Aorta (tissue), 5 donors: ENCODE measurements at regions of chr15 and their contacts with region 1.

Region 1: DNA sequence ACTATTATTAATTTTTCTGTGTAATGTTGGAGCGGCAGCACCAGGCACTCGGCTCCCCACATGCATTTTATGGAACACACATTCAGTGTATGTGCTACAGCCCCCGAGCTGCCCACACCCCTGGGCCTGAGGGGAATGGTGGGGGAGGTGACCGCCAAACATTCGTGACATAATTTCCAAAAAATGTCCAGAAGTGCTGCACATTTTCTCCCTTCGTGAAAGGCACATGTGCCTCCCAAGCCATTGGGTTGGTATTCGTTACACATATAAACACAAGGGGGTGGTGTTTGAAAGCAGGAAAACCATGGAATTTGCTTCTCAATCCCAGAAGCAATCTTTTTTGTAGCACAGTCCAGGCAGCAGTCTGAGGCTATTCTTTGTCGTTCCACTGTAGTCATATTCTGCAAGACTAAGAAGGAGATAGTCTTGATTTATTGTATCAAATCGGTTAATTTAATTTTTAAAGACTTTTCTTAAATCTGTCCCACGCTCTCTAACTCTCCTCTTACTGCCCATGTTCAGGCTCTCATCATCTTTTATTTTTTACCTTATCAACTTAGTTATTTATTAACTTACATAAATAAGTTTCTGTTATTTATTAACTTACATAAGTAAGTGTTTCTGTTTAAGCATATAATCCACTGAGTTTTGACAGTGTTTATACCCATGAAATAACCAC is 39.2 kb upstream of the POLR2M start:
- DNase-seq: no peak
- ATAC-seq: peak; percentile 87
- H3K4me3 ChIP-seq: no peak overlapping the region
- H3K27ac ChIP-seq: peak overlapping the region in 1 of 2 donors; percentile 12
- H3K4me1 ChIP-seq: peaks cover 0 to 2% of the 10 kb centered on the region in 2 donors
- H3K27me3 ChIP-seq: no peaks in the 10 kb centered on the region

Region 2: DNA sequence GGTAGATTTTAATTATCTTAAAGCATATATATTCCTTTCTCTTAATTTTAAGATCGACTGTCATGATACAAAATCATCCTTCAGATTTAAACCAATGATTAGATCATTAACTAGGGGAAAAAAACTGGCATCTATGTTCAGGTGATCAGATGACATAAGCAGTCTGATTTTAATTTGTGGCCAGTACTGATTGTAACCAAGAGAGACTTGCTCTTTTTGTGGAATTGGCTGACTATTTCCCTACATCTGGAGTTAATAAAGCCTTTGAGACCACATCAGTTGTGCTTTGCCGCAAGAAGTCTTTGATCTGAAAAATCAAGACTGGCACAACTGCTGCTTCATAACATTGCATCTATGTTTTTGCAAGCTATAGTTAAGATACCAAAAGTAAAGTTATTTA is 439.4 kb before region 1 on chr15:
- intact Hi-C with region 1: no loop called
- DNase-seq: no peak
- ATAC-seq: no peak
- H3K4me3 ChIP-seq: no peak overlapping the region
- H3K27ac ChIP-seq: no peak overlapping the region
- H3K4me1 ChIP-seq: peaks cover 0 to 2% of the 10 kb centered on the region in 2 donors
- H3K27me3 ChIP-seq: no peaks in the 10 kb centered on the region

Region 3: GRCh38 chr15:57611938-57612337 is 55.4 kb before region 1 on chr15:
- intact Hi-C with region 1: no loop called
- DNase-seq: peak in 1 of 2 donors; percentile 53
- ATAC-seq: peak; percentile 67
- H3K4me3 ChIP-seq: no peak overlapping the region
- H3K27ac ChIP-seq: peak overlapping the region in 1 of 2 donors; percentile 6
- H3K4me1 ChIP-seq: no peaks in the 10 kb centered on the region
- H3K27me3 ChIP-seq: no peaks in the 10 kb centered on the region

Region 4: DNA sequence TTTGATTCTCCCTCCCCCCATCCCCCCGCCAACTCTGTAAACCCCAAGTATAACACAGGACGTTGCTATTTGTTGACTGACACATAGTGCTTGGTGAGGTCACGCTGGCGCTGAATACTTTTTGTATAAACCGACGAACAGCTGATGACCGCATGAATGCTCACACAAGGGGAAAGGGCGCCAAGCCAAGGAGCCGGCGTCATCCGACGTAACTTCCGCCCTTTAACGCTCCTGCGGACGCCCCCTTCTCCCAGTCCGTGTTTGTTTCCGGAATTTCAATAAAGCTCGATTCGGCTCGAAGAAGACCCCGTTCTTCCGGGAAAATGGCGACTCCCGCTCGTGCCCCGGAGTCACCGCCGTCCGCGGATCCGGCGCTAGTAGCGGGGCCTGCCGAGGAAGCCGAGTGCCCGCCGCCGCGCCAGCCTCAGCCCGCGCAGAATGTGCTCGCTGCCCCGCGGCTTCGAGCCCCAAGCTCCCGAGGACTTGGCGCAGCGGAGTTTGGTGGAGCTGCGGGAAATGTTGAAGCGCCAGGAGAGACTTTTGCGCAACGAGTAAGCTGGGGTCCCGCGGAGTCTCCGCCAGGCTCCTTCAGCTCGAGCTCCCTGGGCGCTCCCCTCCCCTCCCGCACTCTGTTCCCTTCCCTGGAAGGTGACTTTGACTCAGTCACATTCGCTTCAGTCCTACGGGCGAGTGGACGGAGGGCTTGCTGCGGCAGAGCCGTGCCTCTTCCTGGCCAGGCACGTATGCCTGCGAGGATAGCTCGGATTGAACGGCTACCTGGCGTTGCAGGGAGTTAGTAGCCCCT is 39.3 kb after region 1 on chr15 and contains the start of gene POLR2M:
- intact Hi-C with region 1: loop called (anchors 2 to 5 kb)
- DNase-seq: peak; percentile 97 to 98
- ATAC-seq: peak; percentile 96
- H3K4me3 ChIP-seq: peak within 1 kb of the TSS; percentile 92 to 96
- H3K27ac ChIP-seq: peak within 1 kb of the TSS; percentile 85 to 97
- H3K4me1 ChIP-seq: peaks cover 1 to 3% of the 10 kb centered on the region in 2 donors
- H3K27me3 ChIP-seq: no peaks in the 10 kb centered on the region
- total RNA-seq, gene POLR2M: 102 to 119 TPM

Region 5: DNA sequence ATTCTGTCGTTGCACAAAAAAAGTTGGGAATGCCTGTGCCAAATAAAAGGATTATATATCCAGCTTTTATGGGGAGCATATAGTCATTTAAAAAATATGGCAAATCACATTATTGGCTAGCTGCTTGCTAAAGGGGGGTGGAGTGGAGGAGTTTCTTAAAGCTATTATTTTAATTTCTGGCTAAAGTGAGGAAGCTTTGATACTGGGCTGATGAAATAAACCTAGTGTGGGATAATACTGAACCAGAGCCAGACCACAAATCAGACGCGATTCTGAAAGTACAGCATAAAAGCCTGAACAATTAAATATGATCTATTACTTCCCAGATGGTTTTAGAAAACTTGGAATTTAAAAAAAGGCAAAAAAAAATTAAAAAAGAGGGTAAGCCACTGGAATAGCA is 53.6 kb after region 1 on chr15:
- intact Hi-C with region 1: loop called in 1 of 2 experiments (anchors 5 kb)
- DNase-seq: no peak
- ATAC-seq: no peak
- H3K4me3 ChIP-seq: no peak overlapping the region
- H3K27ac ChIP-seq: no peak overlapping the region
- H3K4me1 ChIP-seq: no peaks in the 10 kb centered on the region
- H3K27me3 ChIP-seq: no peaks in the 10 kb centered on the region

Region 6: GRCh38 chr15:57732526-57733331 is 65.4 kb after region 1 on chr15:
- intact Hi-C with region 1: loop called in 1 of 2 experiments (anchors 5 kb)
- DNase-seq: no peak
- ATAC-seq: no peak
- H3K4me3 ChIP-seq: no peak overlapping the region
- H3K27ac ChIP-seq: no peak overlapping the region
- H3K4me1 ChIP-seq: no peaks in the 10 kb centered on the region
- H3K27me3 ChIP-seq: no peaks in the 10 kb centered on the region

Region 7: DNA sequence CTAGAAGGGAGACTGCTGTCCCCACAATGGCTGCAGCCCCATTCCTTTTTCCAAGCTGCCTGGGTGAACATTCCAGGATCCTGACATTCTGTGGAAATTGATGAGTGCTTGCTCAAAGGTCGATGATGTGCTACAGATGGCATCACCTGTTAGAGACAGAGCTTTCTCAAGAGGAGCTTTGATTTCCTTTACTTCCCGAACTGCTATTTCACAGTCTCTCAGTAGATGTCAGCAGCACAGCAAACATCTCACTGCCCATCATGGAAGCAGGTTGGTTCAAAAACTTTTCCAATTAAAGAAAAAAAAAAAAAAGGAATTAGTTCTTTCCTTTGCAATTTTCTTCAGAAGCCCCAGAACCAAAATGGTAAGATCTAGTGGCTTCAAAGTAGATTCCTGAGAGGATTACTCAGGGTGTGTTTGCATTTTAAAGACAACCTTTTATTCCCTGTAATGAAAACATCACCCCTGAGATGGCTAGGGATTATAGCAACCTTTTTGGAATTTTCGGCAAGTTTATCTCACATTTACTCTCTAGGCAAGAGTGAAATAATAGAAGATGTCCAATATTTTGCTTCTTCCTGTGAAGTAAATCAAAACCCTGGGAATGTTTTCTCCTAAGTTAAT is 84.0 kb after region 1 on chr15:
- intact Hi-C with region 1: no loop called
- DNase-seq: no peak
- ATAC-seq: no peak
- H3K4me3 ChIP-seq: no peak overlapping the region
- H3K27ac ChIP-seq: no peak overlapping the region
- H3K4me1 ChIP-seq: no peaks in the 10 kb centered on the region
- H3K27me3 ChIP-seq: no peaks in the 10 kb centered on the region

Region 8: DNA sequence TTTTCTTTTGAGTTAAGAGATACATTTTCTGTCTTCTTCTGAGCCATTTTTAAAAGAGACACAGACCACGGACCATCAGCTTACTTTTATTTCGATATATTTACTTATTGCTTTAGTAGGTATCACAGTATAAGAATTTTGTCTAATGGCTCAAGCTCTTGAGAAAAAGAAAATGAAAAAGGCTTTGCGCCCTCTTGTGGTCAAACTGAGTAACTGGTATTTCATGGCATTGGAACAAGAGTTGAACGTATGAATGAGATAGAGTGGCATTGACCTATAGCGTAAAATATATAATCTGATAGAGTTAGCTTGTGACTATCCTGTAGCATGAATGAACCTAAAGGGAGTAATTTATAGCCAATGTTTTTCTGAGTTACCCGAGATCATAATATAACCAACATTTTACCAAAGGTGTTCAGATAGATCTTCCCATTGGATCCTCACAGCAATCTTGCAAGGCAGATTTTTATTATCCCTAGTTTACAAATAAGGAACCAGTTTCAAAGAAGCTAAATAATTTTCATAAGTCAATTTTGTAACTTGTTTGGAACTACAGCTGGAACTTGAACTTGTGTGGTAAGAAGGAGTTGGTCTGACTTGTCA is 193.8 kb after region 1 on chr15:
- intact Hi-C with region 1: loop called (anchors 2 to 5 kb)
- DNase-seq: no peak
- ATAC-seq: peak; percentile 71
- H3K4me3 ChIP-seq: no peak overlapping the region
- H3K27ac ChIP-seq: no peak overlapping the region
- H3K4me1 ChIP-seq: no peaks in the 10 kb centered on the region
- H3K27me3 ChIP-seq: no peaks in the 10 kb centered on the region

Region 9: GRCh38 chr15:58066042-58066867 is 398.9 kb after region 1 on chr15:
- intact Hi-C with region 1: loop called in 1 of 2 experiments (anchors 10 kb)
- DNase-seq: peak; percentile 75 to 88
- ATAC-seq: peak; percentile 92
- H3K4me3 ChIP-seq: peak overlapping the region in 1 of 2 donors; percentile 23
- H3K27ac ChIP-seq: no peak overlapping the region
- H3K4me1 ChIP-seq: no peaks in the 10 kb centered on the region
- H3K27me3 ChIP-seq: no peaks in the 10 kb centered on the region